ENCODE measurements at regions of chr17 and their contacts with region 1.

Region 1: GRCh38 chr17:54992797-54993639 is 24.5 kb downstream of the STXBP4 start:
- DNase-seq: no peak

Region 2: GRCh38 chr17:54785643-54786268 is 207.3 kb before region 1 on chr17:
- intact Hi-C with region 1: no loop called
- DNase-seq: peak in 2 of 10 donors; percentile 28 to 59

Region 3: GRCh38 chr17:54944796-54945195 is 48.2 kb before region 1 on chr17:
- intact Hi-C with region 1: no loop called
- DNase-seq: no peak

Region 4: GRCh38 chr17:55134486-55135157 is 141.6 kb after region 1 on chr17:
- intact Hi-C with region 1: no loop called
- DNase-seq: no peak

Region 5: GRCh38 chr17:55295411-55296170 is 302.6 kb after region 1 on chr17:
- intact Hi-C with region 1: loop called (anchors 2 kb)
- DNase-seq: peak in 5 of 10 donors; percentile 42 to 81 (median 56)

Region 6: GRCh38 chr17:55356434-55357328 is 363.7 kb after region 1 on chr17:
- intact Hi-C with region 1: loop called (anchors 2 kb)
- DNase-seq: peak in 7 of 10 donors; percentile 19 to 82 (median 72)

Region 7: DNA sequence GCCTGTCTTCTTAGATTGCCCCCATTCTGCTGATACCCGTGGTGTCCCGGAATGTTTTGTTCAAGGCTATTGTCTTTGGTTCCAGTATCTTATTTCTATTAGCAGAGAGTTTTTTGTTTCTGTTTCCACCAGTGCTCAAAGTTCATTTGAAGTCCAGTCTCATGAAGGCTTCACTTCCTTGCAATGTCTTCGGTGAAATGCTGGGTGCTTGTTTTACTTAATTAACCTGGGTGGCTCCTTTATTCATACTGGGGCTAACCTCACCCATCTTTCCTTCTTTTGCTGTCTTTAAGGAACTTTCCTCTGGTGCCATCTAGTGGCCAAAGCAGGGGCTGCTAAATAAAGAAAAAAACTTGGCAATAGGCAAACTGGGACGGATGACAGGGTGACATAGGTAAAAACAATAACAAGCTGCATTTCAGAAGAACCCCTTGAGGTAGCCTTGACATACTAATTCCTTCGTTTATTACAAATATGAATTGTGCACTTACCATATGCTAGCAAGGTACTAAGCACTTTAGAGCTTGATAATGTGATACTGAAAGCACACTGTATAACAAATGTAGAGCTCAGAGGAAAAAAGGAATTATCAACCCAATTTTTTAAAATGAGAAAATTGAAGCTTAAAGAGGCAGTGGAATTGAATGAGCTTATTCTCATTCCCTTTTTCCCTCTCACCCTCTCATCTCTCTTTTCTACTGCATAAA is 521.0 kb after region 1 on chr17:
- intact Hi-C with region 1: loop called (anchors 1 kb)
- DNase-seq: peak in 7 of 10 donors; percentile 21 to 72 (median 63)

Measured in posterior cingulate gyrus (tissue), 11 donors.